ENCODE measurements at regions of chr3 and their contacts with region 1.

Region 1: GRCh38 chr3:44338010-44338827 is at the start of gene TCAIM:
- DNase-seq: peak; percentile 96
- ATAC-seq: peak; percentile 96
- H3K4me3 ChIP-seq: peak within 1 kb of the TSS; percentile 63
- H3K27ac ChIP-seq: peak within 1 kb of the TSS; percentile 86
- H3K4me1 ChIP-seq: 0 out of 2 replicates have a peak, but pooled peaks cover 2% of the 10 kb centered on the region
- H3K27me3 ChIP-seq: peaks cover 3% of the 10 kb centered on the region
- CTCF ChIP-seq: no peak
- POLR2A ChIP-seq: peak; percentile 45; the same call in 1 of the 2 replicates
- RAD21 ChIP-seq: no peak
- total RNA-seq, gene TCAIM: 21.5 and 21.9 TPM in 2 replicates

Region 2: GRCh38 chr3:44477312-44478030 is 139.3 kb after region 1 on chr3 and contains the start of gene ZNF445:
- CTCF ChIA-PET with region 1: no interaction called
- POLR2A ChIA-PET with region 1: no interaction called
- dilution Hi-C with region 1: no loop called
- in situ Hi-C with region 1: no loop called
- intact Hi-C with region 1: loop called (anchors 2 kb)
- DNase-seq: peak; percentile 74
- ATAC-seq: peak; percentile 97
- H3K4me3 ChIP-seq: peak within 1 kb of the TSS; percentile 55
- H3K27ac ChIP-seq: peak within 1 kb of the TSS; percentile 74
- H3K4me1 ChIP-seq: no peaks in the 10 kb centered on the region; the same call in 1 of the 2 replicates
- H3K27me3 ChIP-seq: no peaks in the 10 kb centered on the region
- CTCF ChIP-seq: no peak
- POLR2A ChIP-seq: peak; percentile 65; the same call in 1 of the 2 replicates
- RAD21 ChIP-seq: no peak
- total RNA-seq, gene ZNF445: 6.3 and 6.4 TPM in 2 replicates

Region 3: DNA sequence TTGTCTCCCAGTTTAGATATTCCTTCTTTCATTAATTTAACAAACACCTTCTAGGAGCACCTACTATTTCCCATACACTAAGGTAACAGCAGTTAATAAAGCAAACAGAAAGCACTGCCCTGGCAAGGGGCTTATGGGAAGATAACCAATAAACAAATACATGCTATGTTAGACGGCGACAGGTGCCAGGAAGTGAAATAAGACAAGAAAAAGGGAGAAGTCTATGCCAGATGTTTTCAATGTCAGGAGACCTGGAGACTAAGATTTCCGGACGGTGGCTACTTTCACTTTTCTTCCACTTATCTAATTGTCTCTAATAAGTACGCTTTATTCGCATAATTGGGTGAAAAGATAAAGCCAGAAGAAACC is 171.8 kb after region 1 on chr3:
- CTCF ChIA-PET with region 1: no interaction called
- POLR2A ChIA-PET with region 1: no interaction called
- dilution Hi-C with region 1: no loop called
- in situ Hi-C with region 1: no loop called
- intact Hi-C with region 1: loop called (anchors 5 kb)
- DNase-seq: peak; percentile 17
- ATAC-seq: no peak
- H3K4me3 ChIP-seq: peak overlapping the region; percentile 94
- H3K27ac ChIP-seq: peak overlapping the region; percentile 15; the same call in 1 of the 2 replicates
- H3K4me1 ChIP-seq: peaks cover 6% of the 10 kb centered on the region
- H3K27me3 ChIP-seq: no peaks in the 10 kb centered on the region
- CTCF ChIP-seq: no peak
- POLR2A ChIP-seq: no peak
- RAD21 ChIP-seq: no peak

Region 4: DNA sequence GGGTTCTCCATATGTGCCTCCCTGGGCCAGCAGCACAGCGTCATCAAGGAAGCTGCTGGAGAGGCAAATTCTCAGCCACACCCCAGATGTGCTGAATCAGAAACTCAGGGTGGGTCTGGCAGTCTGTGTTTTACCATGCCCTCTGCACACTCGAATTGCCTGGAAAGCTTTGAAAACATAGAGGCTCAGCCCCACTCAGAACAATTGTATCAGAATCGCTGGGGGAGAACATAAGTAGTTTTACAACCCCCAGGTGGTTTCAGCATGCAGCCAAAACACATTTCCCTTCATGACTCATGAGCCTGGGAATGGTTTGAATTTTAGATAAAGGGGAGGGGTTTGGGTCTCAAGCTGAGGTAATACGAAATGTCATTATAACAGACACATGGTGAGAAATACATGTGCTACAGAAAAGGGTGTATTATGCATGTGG is 545.8 kb after region 1 on chr3:
- CTCF ChIA-PET with region 1: no interaction called
- POLR2A ChIA-PET with region 1: no interaction called
- dilution Hi-C with region 1: no loop called
- in situ Hi-C with region 1: loop called (anchors 25 kb)
- intact Hi-C with region 1: no loop called
- DNase-seq: peak; percentile 95
- ATAC-seq: peak; percentile 49
- H3K4me3 ChIP-seq: no peak overlapping the region
- H3K27ac ChIP-seq: peak overlapping the region; percentile 2; the same call in 1 of the 2 replicates
- H3K4me1 ChIP-seq: peaks cover 24% of the 10 kb centered on the region
- H3K27me3 ChIP-seq: no peaks in the 10 kb centered on the region
- CTCF ChIP-seq: no peak
- POLR2A ChIP-seq: no peak
- RAD21 ChIP-seq: no peak

Measured in IMR-90 (cell line).